ENCODE measurements at regions of chr19 and their contacts with region 1.

Region 1: DNA sequence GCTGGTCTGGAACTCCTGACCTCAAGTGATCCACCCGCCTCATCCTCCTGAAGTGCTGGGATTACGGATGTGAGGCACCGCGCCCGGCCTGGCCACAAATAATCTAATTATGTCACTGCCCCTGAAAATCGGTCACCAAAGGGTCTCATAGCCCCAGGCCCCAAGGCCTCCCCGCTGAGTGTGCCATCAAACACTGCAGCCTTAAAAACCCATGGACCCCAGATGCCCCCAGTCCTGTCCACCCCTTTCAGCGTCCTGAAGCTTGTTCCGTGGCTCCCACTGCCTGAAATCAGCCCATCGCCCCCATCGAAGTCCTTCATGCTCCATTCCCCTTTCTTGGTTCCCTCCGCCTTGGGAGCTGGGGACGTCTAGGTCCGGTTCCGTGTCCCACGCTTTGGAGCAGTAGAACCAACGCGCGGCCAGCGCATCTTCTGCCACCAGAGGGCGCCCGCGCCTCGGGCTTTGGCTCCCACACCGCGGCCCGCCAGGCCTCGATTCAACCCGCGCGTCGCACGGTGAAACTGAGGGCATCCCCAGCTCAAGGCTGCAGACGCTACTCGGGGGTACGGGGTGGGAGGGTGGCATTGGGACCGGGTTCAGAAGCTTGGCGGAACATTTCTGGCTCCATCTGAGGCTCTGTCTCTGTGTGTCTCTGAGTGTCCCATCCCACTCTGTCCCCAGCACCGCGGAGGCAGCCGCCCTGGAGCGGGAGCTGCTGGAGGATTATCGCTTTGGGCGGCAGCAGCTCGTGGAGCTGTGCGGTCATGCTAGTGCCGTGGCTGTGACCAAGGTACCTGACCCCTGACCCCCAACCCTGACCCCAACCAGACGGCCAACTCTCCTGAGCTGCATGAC is 3.5 kb downstream of the YJEFN3 start:
- DNase-seq: no peak
- H3K4me3 ChIP-seq: peak overlapping the region in 1 of 4 donors; percentile 21
- H3K27ac ChIP-seq: no peak overlapping the region
- H3K4me1 ChIP-seq: peaks cover 6 to 16% (median 6%) of the 10 kb centered on the region in 3 donors
- H3K27me3 ChIP-seq: peaks cover 0 to 17% (median 0%) of the 10 kb centered on the region in 4 donors
- CTCF ChIP-seq: peak; percentile 92 to 99 (median 94)
- POLR2A ChIP-seq: no peak

Region 2: GRCh38 chr19:19444681-19445155 is 87.5 kb before region 1 on chr19:
- intact Hi-C with region 1: no loop called
- DNase-seq: no peak
- H3K4me3 ChIP-seq: no peak overlapping the region
- H3K27ac ChIP-seq: peak overlapping the region in 2 of 4 donors; percentile 24 to 30
- H3K4me1 ChIP-seq: peaks cover 0 to 40% (median 7%) of the 10 kb centered on the region in 3 donors
- H3K27me3 ChIP-seq: no peaks in the 10 kb centered on the region
- CTCF ChIP-seq: no peak
- POLR2A ChIP-seq: no peak

Region 3: DNA sequence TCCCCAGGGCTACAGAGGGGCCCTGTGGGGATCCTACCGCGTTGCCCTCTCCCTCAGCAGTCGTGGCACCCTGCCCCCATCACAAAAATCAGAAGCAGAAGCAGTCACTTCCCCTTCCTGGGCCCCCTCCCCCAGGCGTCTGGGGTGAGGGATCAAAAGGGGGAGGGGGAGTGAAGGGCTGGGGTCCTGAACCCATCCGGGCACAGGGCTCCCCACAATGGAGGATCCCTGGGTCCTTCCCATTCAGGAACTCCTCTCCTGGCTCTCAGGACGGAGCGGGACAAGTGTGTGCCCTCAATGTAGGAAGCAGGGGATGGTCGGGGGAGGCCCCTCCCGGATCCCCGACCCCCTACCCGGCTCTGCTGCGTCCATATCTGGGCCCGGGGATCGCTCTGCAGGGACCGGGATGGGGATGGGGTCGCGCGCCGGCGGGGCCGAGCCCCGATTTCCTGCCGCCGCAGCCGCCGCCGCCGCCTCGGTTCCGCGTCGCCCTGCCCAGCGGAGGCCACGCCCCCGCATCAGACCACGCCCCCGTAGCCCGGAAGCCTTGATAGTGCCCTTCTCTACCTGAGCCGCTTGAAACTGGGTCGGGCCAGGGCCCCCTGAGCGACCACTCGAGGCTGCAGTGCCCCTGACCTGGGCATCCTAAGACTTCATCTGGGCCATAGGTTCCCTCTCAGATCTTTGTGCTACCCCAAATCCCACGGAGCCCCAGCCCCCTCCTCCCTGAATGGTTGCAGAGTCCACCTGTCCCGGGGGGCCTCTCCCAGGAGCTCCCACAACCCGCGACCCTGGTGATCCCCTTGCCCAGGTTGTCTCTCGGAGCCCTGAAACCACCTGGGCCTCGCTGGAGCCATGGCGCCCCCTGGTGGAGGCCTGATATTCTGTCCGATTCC is 111.2 kb after region 1 on chr19 and contains the start of gene GMIP:
- intact Hi-C with region 1: loop called (anchors 5 kb)
- DNase-seq: peak; percentile 64
- H3K4me3 ChIP-seq: peak within 1 kb of the TSS; percentile 69 to 80 (median 74)
- H3K27ac ChIP-seq: peak within 1 kb of the TSS; percentile 74 to 87 (median 82)
- H3K4me1 ChIP-seq: peaks cover 5 to 24% (median 8%) of the 10 kb centered on the region in 3 donors
- H3K27me3 ChIP-seq: no peaks in the 10 kb centered on the region
- CTCF ChIP-seq: peak; percentile 73 to 90 (median 88)
- POLR2A ChIP-seq: peak in 3 of 4 donors; percentile 1 to 82 (median 28)
- total RNA-seq, gene GMIP: 7.0 to 22.8 (median 10.0) TPM

Measured in esophagus squamous epithelium (tissue), 5 donors.